ENCODE measurements at regions of chr3 and their contacts with region 1.

Region 1: DNA sequence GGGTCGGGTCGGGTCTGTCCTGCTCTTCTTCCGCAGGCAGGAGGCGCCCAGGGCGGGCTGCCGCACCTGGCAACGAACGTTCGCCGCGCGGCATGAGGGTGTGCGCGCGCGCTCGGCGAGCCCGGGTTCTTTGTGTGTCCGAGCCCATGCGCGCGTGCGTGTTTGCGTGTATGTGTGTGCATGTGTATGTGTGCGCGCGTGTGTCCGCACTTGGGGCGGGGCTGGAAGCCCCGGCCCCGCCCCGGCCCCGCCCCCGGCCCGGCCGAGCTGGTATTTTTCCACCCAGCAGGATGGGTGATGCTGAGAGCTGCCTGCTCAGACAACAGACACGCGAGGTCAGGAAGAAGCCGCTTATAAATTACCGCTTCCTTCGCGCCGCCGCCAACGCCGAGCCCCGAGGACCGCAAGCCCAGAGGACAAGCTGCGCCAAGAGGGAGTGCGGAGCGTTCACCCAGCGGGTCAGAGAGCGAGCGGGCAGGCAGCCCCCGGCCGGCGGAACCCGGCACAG is at the start of gene SLC6A6:
- DNase-seq: peak; percentile 98
- ATAC-seq: peak; percentile 86
- H3K4me3 ChIP-seq: peak within 1 kb of the TSS; percentile 95
- H3K27ac ChIP-seq: peak within 1 kb of the TSS; percentile 77
- H3K4me1 ChIP-seq: peaks cover 32% of the 10 kb centered on the region
- H3K27me3 ChIP-seq: no peaks in the 10 kb centered on the region
- CTCF ChIP-seq: peak; percentile 57
- total RNA-seq, gene SLC6A6: 28.1 and 31.9 TPM in 2 replicates

Region 2: DNA sequence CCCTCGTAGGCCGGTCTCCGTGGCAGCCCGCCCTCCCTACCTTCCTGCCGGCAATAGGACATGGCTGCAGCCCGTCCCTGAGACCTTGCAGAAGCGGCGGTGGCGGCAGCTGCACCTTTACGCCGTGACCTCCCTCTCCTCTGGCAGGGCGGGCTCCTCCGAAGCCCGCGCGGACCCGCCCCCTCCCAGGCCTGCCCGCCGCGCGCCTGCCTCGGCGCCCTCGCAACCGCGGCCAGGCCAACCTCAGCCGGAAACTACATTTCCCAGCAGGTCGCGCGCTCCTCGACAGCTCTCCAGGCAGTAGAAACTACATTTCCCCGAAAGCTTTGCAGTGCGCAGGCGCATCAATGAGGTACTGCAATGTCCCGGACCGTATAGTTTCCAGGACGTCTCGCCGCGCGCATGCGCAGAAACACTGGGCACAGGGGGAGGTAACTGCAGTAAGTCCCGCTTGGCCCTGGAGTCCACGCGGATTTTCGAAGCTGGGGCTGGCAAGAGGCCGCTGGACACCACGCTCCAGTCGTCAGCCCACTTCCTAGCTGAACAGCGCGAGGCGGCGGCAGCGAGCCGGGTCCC is 277.7 kb before region 1 on chr3 and contains the starts of genes CHCHD4 and TMEM43:
- CTCF ChIA-PET with region 1: no interaction called
- POLR2A ChIA-PET with region 1: no interaction called
- intact Hi-C with region 1: loop called (anchors 1 kb)
- DNase-seq: peak; percentile 99
- ATAC-seq: peak; percentile 80
- H3K4me3 ChIP-seq: peak within 1 kb of the TSS; percentile 87
- H3K27ac ChIP-seq: peak within 1 kb of the TSS; percentile 55
- H3K4me1 ChIP-seq: peaks cover 23% of the 10 kb centered on the region
- H3K27me3 ChIP-seq: no peaks in the 10 kb centered on the region
- CTCF ChIP-seq: no peak
- total RNA-seq, gene CHCHD4: 39.5 and 43.3 TPM in 2 replicates
- total RNA-seq, gene TMEM43: 78.6 and 83.1 TPM in 2 replicates

Region 3: GRCh38 chr3:14261229-14261628 is 141.1 kb before region 1 on chr3:
- CTCF ChIA-PET with region 1: interaction called, 4 read pairs
- POLR2A ChIA-PET with region 1: no interaction called
- intact Hi-C with region 1: loop called (anchors 1 kb)
- DNase-seq: peak; percentile 85
- ATAC-seq: peak; percentile 53
- H3K4me3 ChIP-seq: no peak overlapping the region
- H3K27ac ChIP-seq: no peak overlapping the region
- H3K4me1 ChIP-seq: peaks cover 9% of the 10 kb centered on the region
- H3K27me3 ChIP-seq: no peaks in the 10 kb centered on the region
- CTCF ChIP-seq: peak; percentile 98

Region 4: GRCh38 chr3:14371573-14372474 is 30.5 kb before region 1 on chr3:
- CTCF ChIA-PET with region 1: interaction called, 3 read pairs
- POLR2A ChIA-PET with region 1: no interaction called
- intact Hi-C with region 1: loop called (anchors 1 kb)
- DNase-seq: peak; percentile 95
- ATAC-seq: peak; percentile 83
- H3K4me3 ChIP-seq: no peak overlapping the region
- H3K27ac ChIP-seq: peak overlapping the region; percentile 40
- H3K4me1 ChIP-seq: peaks cover 34% of the 10 kb centered on the region
- H3K27me3 ChIP-seq: no peaks in the 10 kb centered on the region
- CTCF ChIP-seq: peak; percentile 38; the same call in 1 of the 2 replicates

Region 5: GRCh38 chr3:14452679-14453367 is 50.5 kb after region 1 on chr3:
- CTCF ChIA-PET with region 1: interaction called, 8 read pairs
- POLR2A ChIA-PET with region 1: interaction called, 3 read pairs
- intact Hi-C with region 1: loop called (anchors 1 kb)
- DNase-seq: peak; percentile 92
- ATAC-seq: peak; percentile 86
- H3K4me3 ChIP-seq: peak overlapping the region; percentile 45
- H3K27ac ChIP-seq: peak overlapping the region; percentile 92
- H3K4me1 ChIP-seq: peaks cover 25% of the 10 kb centered on the region
- H3K27me3 ChIP-seq: no peaks in the 10 kb centered on the region
- CTCF ChIP-seq: no peak

Region 6: GRCh38 chr3:14467814-14468620 is 65.7 kb after region 1 on chr3:
- CTCF ChIA-PET with region 1: interaction called, 3 read pairs
- POLR2A ChIA-PET with region 1: no interaction called
- intact Hi-C with region 1: loop called (anchors 2 kb)
- DNase-seq: peak; percentile 50
- ATAC-seq: peak; percentile 23
- H3K4me3 ChIP-seq: no peak overlapping the region
- H3K27ac ChIP-seq: no peak overlapping the region
- H3K4me1 ChIP-seq: peaks cover 14% of the 10 kb centered on the region
- H3K27me3 ChIP-seq: no peaks in the 10 kb centered on the region
- CTCF ChIP-seq: peak; percentile 90

Measured in PC-3 (cell line).